Heart right ventricle (tissue), 16 donors: ENCODE measurements at regions of chr13 and their contacts with region 1.

Region 1: DNA sequence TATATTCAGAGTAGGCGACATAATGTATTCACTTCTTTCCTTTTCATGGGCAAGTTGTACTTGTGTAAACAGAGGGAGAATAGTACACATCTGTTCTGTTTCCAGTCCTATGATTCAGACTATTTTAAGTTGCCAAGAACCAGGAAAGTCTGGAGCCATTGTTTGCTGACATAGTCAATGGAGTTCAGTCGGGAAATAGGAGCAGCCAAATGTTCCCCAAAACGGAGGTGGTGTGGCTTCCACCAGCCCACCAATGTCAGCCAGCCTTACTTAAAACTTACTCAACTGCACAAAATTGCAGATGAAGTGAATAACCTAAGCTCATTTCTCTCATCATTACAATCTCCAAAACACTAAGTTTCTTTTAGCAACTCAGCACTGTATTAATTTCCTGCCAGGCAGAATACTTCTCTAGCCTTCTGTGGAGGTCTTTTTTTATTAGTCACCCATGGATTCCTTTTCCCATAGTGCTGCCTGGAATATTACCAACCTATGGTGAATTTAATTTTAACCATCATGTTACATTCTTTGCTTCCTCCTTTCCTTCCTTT is 22.3 kb upstream of the CSNK1A1L start:
- DNase-seq: peak in 1 of 2 donors; percentile 51
- ATAC-seq: peak; percentile 83 to 96 (median 94)
- H3K4me3 ChIP-seq: no peak overlapping the region
- H3K27ac ChIP-seq: peak overlapping the region in 9 of 10 donors; percentile 5 to 75 (median 34)
- H3K4me1 ChIP-seq: peaks cover 0 to 25% (median 8%) of the 10 kb centered on the region in 9 donors
- H3K27me3 ChIP-seq: no peaks in the 10 kb centered on the region
- CTCF ChIP-seq: no peak

Region 2: DNA sequence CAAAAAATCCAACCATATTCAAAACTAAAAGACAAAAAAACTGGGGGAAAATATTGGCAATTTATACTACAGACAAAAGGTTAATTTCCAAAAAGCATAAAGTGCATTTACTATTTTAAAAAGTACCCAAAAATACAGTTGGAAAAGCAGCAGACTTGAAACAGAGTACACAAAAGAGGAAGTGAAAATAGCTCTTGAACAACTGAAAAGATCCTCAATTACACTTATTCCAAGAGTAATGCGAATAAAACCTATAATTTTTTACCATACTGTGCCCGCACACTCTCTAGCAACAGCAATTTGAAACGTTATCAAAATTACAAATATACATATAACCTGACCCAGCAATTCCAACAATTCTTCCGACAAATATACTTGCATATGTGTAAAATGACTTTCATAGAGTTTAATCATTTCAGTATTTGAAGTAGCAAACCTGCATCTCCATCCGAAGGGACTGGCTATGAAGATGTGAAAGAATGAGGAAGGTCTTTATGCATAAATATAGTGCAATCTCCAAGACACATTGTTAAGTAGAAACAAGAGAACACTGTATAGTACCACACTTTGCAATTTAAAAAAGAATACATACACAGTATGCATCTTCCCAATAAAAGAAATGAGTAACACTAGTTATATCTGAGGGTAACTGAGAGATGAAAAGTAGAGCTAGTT is 154.0 kb before region 1 on chr13:
- intact Hi-C with region 1: no loop called
- DNase-seq: no peak
- ATAC-seq: no peak
- H3K4me3 ChIP-seq: no peak overlapping the region
- H3K27ac ChIP-seq: no peak overlapping the region
- H3K4me1 ChIP-seq: no peaks in the 10 kb centered on the region
- H3K27me3 ChIP-seq: no peaks in the 10 kb centered on the region
- CTCF ChIP-seq: no peak

Region 3: GRCh38 chr13:37288057-37288720 is 160.4 kb after region 1 on chr13:
- intact Hi-C with region 1: loop called in 1 of 10 experiments (anchors 2 kb)
- DNase-seq: peak in 1 of 2 donors; percentile 21
- ATAC-seq: peak; percentile 64 to 97 (median 78)
- H3K4me3 ChIP-seq: no peak overlapping the region
- H3K27ac ChIP-seq: peak overlapping the region in 4 of 10 donors; percentile 5 to 54 (median 42)
- H3K4me1 ChIP-seq: peaks cover 0 to 16% (median 3%) of the 10 kb centered on the region in 9 donors
- H3K27me3 ChIP-seq: no peaks in the 10 kb centered on the region
- CTCF ChIP-seq: no peak